ENCODE measurements at regions of chr16 and their contacts with region 1.

Region 1: DNA sequence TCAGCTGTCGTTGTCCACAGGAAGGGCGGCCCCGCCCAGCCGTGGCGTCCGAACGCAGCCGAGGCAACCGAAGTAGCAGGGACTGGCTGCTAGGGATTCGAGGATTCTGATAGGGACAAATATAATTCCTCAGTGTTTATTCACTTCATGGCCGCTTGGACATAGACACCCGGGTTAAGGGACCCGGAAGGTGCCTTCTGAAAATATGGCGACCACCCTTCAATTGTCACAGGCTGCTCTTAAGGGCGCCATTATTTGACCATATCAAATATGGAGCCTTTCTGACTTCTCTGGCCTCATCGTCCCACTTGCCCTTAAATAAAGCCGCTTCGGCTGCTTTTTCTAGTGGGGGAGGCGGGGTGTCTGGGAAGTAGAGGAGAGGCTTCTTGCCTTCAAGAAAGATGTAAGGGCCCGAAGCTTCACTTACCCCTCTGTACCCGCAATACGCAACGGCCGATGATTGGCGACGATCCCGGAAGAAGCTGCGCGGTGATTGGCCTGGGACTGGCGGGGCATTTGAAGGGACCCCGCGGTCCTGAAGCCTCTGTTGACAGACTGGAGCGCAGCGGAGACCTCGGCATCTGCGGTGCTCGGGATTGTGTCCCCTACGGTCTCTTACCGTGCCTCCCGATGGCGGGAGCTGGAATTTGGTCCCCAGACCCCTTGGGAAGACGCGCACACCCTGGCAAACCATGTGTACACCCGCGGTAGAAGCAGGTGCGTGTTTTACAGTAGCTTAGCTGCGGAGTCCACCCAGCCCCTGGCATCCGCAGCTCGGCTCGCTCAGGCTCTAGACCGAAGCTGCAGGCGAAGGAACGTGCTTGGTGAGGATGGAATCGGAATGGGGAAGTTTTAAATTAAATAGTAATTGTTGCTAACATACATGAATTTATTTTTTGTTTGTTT is at the start of gene ZNF688:
- DNase-seq: peak; percentile 96
- ATAC-seq: peak; percentile 81
- H3K4me3 Mint-ChIP-seq: peak within 1 kb of the TSS; percentile 92
- H3K27ac Mint-ChIP-seq: peak within 1 kb of the TSS; percentile 93
- H3K4me1 Mint-ChIP-seq: peaks cover 41% of the 10 kb centered on the region
- H3K27me3 Mint-ChIP-seq: no peaks in the 10 kb centered on the region
- CTCF ChIP-seq: no peak
- total RNA-seq, gene ZNF688: 4.7 to 5.5 TPM

Region 2: DNA sequence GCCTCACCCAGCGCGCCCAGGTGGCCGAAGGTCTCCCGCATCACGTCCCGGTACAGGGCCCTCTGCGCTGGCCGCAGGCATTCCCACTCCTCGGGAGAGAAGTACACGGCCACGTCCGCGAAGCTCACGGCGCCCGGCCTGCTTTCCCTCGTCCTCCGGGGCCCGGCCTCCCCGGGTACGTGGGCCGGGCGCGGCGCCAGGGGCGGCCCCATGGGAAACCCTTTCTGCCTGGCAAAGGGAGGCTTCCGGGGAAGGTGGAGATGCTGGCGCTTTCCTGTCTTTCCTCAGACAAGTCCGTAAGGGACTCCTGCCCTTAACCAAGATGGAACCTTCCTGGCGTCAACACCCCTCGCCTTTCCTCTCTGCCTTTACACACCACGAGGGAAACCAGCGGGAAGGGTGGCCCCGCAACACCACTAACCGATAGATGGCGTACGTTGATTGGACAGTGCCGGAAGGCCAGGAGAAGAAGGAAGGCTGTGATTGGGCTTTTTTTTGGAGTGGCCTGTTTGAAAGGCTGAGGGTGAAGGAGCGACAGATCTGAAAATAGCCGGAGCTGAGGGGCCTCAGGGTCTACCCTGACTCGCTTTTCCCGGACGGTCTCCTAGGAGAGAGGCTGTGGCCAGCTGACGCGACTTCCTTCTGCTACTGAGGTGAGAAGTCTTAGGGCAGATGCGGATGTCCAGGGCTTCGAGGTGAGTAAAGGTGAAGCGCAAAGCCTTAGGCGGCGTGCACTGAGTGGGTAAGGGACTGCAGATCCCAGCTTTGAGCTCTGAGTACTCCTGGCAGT is 13.6 kb after region 1 on chr16 and contains the start of gene ZNF785:
- CTCF ChIA-PET with region 1: interaction called, 5 read pairs
- POLR2A ChIA-PET with region 1: interaction called, 24 read pairs
- intact Hi-C with region 1: no loop called
- DNase-seq: peak; percentile 97
- ATAC-seq: peak; percentile 98
- H3K4me3 Mint-ChIP-seq: peak within 1 kb of the TSS; percentile 91
- H3K27ac Mint-ChIP-seq: peak within 1 kb of the TSS; percentile 88
- H3K4me1 Mint-ChIP-seq: peaks cover 25% of the 10 kb centered on the region
- H3K27me3 Mint-ChIP-seq: no peaks in the 10 kb centered on the region
- CTCF ChIP-seq: no peak
- total RNA-seq, gene ZNF785: 8.8 to 10.3 TPM